AG04449 (cell line): ENCODE measurements at regions of chr1 and their contacts with region 1.

Region 1: GRCh38 chr1:162847839-162848453 is 13.0 kb downstream of the CCDC190 start:
- DNase-seq: no peak
- H3K4me3 ChIP-seq: no peak overlapping the region
- CTCF ChIP-seq: peak; percentile 83

Region 2: GRCh38 chr1:162835157-162835899 is 12.6 kb before region 1 on chr1:
- CTCF ChIA-PET with region 1: interaction called, 59 read pairs
- POLR2A ChIA-PET with region 1: no interaction called
- DNase-seq: no peak
- H3K4me3 ChIP-seq: no peak overlapping the region
- CTCF ChIP-seq: no peak

Region 3: GRCh38 chr1:162886705-162887104 is 38.8 kb after region 1 on chr1:
- CTCF ChIA-PET with region 1: no interaction called
- POLR2A ChIA-PET with region 1: no interaction called
- DNase-seq: no peak
- H3K4me3 ChIP-seq: no peak overlapping the region
- CTCF ChIP-seq: no peak

Region 4: DNA sequence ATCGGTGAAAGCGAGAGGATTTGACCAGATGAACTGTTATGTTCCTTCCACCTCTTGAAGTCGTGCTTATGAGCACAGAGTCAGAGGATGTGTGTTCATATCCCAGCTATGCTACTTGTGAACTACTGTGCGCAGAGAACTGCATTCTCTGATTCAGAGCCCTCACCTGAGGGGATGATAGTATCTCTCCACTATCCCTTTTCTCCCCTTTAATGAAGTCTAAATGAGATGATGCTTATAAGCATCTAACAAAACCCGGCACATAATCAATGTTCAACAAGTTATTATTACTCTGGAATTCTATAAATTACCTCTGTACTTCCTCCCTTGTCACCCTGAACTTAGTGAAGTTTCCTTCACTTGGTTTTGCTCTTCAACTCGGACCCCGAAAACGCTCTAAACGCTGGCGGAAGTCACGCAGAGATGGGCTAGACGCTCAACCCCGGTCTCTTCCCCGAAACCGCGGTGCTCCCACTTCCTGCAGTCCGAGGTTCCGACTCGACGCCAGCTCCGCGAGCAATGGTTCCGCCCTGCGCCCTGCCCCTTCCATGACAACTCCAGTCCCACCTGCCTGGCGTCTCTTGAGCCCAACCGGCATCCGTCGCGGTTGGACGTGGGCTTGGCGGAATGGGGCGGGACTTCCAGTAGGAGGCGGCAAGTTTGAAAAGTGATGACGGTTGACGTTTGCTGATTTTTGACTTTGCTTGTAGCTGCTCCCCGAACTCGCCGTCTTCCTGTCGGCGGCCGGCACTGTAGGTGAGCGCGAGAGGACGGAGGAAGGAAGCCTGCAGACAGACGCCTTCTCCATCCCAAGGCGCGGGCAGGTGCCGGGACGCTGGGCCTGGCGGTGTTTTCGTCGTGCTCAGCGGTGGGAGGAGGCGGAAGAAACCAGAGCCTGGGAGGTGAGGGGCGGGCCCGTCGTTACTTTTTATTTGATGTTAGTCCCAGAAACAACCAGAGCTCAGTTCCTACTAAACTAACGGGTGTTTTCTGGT is 473.7 kb after region 1 on chr1 and contains the start of gene NUF2:
- CTCF ChIA-PET with region 1: interaction called, 142 read pairs
- POLR2A ChIA-PET with region 1: no interaction called
- DNase-seq: peak; percentile 96
- H3K4me3 ChIP-seq: peak within 1 kb of the TSS; percentile 87
- CTCF ChIP-seq: no peak